ENCODE measurements at regions of chr17 and their contacts with region 1.

Region 1: GRCh38 chr17:43940630-43941029 is 1.6 kb downstream of the PPY start:
- DNase-seq: no peak
- ATAC-seq: peak in 2 of 4 donors; percentile 18 to 25
- H3K4me3 ChIP-seq: no peak overlapping the region
- H3K27ac ChIP-seq: no peak overlapping the region
- H3K4me1 ChIP-seq: peaks cover 0 to 3% (median 0%) of the 10 kb centered on the region in 4 donors
- H3K27me3 ChIP-seq: no peaks in the 10 kb centered on the region
- CTCF ChIP-seq: peak in 3 of 4 donors; percentile 10 to 17 (median 15)
- POLR2A ChIP-seq: no peak

Region 2: GRCh38 chr17:43634591-43635125 is 306.0 kb before region 1 on chr17:
- intact Hi-C with region 1: no loop called
- DNase-seq: peak in 1 of 3 donors; percentile 63
- ATAC-seq: peak in 2 of 4 donors; percentile 20 to 54
- H3K4me3 ChIP-seq: no peak overlapping the region
- H3K27ac ChIP-seq: peak overlapping the region in 1 of 3 donors; percentile 23
- H3K4me1 ChIP-seq: no peaks in the 10 kb centered on the region
- H3K27me3 ChIP-seq: no peaks in the 10 kb centered on the region
- CTCF ChIP-seq: no peak
- POLR2A ChIP-seq: no peak

Region 3: DNA sequence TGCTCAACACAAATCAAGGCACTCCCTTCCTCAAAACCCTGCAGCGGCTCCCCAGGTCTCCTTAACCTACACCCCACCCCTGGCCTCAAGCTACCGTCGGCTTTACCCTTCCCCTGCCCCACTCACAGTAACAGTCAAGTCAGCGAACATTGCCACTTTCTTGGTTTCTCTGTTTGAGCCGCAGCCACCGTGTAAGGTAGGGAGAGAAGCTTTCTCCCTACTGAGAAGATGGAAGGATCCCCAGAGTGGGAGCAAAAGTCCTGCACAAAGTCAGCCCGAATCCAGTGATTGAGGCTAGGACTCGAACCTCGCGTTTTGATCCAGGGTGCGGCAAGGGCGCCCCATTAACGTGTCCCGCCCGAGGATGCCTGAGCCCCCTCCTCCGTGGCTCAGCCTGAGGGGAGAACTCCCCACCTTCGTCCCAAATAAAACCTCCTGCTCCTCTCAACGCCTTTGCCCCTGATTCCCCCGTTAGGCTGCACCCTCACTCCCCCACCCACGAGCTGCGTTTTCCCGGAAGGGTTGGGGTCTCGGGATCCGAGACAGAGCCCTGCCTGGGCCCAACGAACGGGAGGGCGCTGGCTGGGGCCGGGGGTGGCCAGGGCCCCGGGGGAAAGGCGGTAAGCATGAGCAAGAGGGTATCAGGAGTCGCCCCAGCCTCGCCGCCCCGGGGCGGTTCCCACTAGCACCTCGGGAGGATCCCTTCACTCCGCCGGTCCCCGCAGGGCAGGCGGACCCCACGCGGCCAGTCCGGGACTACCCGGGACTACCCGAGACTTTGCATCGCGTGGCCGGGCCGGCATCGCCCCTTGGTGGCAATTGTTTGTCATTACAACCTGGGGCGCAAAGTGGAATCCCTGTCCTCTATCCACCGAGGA is 53.9 kb after region 1 on chr17:
- intact Hi-C with region 1: loop called in 1 of 2 experiments (anchors 5 kb)
- DNase-seq: peak; percentile 71 to 77 (median 73)
- ATAC-seq: peak; percentile 88 to 95 (median 93)
- H3K4me3 ChIP-seq: peak overlapping the region; percentile 25 to 44 (median 39)
- H3K27ac ChIP-seq: no peak overlapping the region
- H3K4me1 ChIP-seq: peaks cover 0 to 11% (median 0%) of the 10 kb centered on the region in 4 donors
- H3K27me3 ChIP-seq: no peaks in the 10 kb centered on the region
- CTCF ChIP-seq: peak; percentile 87 to 94 (median 92)
- POLR2A ChIP-seq: no peak

Region 4: GRCh38 chr17:44044067-44044466 is 103.4 kb after region 1 on chr17:
- intact Hi-C with region 1: loop called (anchors 10 kb)
- DNase-seq: no peak
- ATAC-seq: no peak
- H3K4me3 ChIP-seq: no peak overlapping the region
- H3K27ac ChIP-seq: no peak overlapping the region
- H3K4me1 ChIP-seq: peaks cover 0 to under 1% (median 0%) of the 10 kb centered on the region in 4 donors
- H3K27me3 ChIP-seq: no peaks in the 10 kb centered on the region
- CTCF ChIP-seq: no peak
- POLR2A ChIP-seq: no peak

Region 5: DNA sequence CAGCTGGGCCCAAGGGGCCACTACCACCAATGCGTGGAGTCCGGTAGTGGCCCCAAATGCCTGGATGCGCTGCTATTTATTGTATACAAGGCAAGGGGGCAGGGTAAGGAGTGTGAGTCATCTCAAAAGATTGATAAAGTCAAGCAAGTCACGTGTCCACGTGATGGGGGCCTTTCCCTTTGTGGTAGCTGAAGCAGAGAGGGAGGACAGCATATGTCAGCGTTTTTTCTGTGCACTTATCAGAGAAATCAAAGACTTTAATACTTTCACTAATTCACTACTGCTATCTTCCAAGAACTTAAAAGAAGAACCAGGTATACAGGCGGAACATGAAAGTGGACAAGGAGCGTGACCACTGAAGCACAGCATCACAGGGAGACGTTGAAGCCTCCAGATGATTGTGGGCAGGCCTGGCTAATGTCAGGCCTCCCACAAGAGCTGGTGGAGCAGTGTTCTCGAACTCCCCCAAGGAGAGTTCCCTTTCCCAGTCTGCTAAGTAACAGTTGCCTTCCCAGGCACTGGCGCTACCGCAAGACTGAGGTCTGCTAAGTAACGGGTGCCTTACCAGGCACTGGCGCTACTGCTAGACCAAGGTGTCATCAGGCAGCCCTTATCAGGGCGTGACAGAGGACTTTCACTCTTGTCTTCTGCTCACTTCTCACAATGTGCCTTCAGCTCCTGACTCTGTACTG is 219.0 kb after region 1 on chr17:
- intact Hi-C with region 1: loop called in 1 of 2 experiments (anchors 10 kb)
- DNase-seq: no peak
- ATAC-seq: no peak
- H3K4me3 ChIP-seq: no peak overlapping the region
- H3K27ac ChIP-seq: no peak overlapping the region
- H3K4me1 ChIP-seq: peaks cover 0 to 5% (median 0%) of the 10 kb centered on the region in 4 donors
- H3K27me3 ChIP-seq: no peaks in the 10 kb centered on the region
- CTCF ChIP-seq: no peak
- POLR2A ChIP-seq: no peak